OCI-LY7 (cell line): ENCODE measurements at regions of chr3 and their contacts with region 1.

Region 1: GRCh38 chr3:186985661-186986364 is 55.5 kb downstream of the ST6GAL1 start:
- DNase-seq: peak; percentile 75
- H3K4me3 ChIP-seq: peak overlapping the region; percentile 54
- H3K27ac ChIP-seq: peak overlapping the region; percentile 98
- H3K4me1 ChIP-seq: peaks cover 75% of the 10 kb centered on the region
- CTCF ChIP-seq: no peak

Region 2: GRCh38 chr3:186959029-186959624 is 26.7 kb before region 1 on chr3:
- CTCF ChIA-PET with region 1: no interaction called
- POLR2A ChIA-PET with region 1: interaction called, 10 read pairs
- intact Hi-C with region 1: no loop called
- DNase-seq: peak; percentile 57
- H3K4me3 ChIP-seq: peak overlapping the region; percentile 0
- H3K27ac ChIP-seq: peak overlapping the region; percentile 51
- H3K4me1 ChIP-seq: peaks cover 37% of the 10 kb centered on the region
- CTCF ChIP-seq: no peak

Region 3: GRCh38 chr3:187000711-187001151 is 14.9 kb after region 1 on chr3:
- CTCF ChIA-PET with region 1: no interaction called
- POLR2A ChIA-PET with region 1: interaction called, 37 read pairs
- intact Hi-C with region 1: no loop called
- DNase-seq: peak; percentile 92
- H3K4me3 ChIP-seq: peak overlapping the region; percentile 77
- H3K27ac ChIP-seq: peak overlapping the region; percentile 98
- H3K4me1 ChIP-seq: peaks cover 72% of the 10 kb centered on the region
- CTCF ChIP-seq: no peak

Region 4: DNA sequence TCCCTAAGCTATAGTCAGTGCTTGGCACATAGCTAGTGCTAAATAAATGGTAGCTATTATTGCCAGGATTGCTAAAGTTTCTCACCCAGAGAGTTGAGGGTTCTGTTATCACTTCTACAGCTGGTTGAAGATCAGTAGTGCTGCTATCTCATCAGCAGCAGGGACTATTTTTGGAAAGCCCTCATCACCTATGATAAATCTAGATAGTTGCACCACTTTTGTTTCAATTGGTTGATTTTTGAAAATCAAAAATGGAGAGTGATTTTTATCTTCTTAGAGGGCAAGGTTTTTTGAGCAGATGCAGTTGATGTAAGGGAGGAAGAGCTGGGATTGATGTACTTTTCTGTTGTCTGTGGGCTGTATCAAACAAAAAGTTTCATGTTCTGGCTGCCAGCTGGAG is 46.1 kb after region 1 on chr3:
- CTCF ChIA-PET with region 1: no interaction called
- POLR2A ChIA-PET with region 1: interaction called, 21 read pairs
- intact Hi-C with region 1: no loop called
- DNase-seq: no peak
- H3K4me3 ChIP-seq: peak overlapping the region; percentile 42
- H3K27ac ChIP-seq: peak overlapping the region; percentile 98
- H3K4me1 ChIP-seq: peaks cover 62% of the 10 kb centered on the region
- CTCF ChIP-seq: no peak

Region 5: DNA sequence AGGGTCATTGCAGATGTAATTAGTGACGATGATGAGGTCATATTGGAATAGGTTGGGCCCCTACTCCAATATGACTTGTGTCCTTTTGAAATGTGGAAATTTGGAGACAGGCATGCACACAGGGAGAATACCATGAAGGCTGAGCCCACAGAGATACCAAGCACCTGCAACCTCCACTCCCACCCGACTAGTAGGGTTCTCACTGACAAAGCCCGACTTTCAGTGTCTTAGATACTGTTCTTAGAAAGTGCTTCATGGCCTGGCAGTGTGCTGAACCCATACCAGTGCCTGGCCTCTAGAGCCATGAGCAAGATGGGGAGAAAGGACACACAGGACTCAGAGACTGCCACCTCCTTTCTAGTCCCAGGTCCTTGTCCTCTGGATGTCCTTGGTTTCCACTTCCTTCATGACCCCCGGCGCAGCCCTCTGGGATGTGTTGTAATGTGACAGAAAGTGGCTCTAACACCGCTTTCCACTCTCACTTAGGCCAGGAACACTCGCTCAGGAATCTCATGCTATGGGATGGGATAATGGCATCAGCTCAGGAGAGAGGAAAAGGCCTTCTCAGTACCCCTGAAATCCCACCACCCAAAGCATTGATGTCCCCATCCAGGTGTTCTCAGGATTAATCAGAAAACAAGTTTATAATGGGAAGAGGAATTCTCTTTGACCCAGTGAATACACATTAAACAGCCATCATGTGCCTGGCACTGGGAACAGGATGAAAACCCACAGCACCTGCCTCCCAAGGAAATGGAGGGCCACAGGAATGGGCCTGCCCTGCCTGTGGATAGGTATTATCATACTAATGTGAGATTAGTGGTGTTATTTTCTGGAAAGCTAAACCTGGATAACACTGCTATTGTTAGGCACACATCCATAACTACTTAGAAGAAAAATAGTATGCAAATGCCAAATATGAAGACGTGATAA is 93.5 kb after region 1 on chr3:
- CTCF ChIA-PET with region 1: no interaction called
- POLR2A ChIA-PET with region 1: no interaction called
- intact Hi-C with region 1: no loop called
- DNase-seq: no peak
- H3K4me3 ChIP-seq: no peak overlapping the region
- H3K27ac ChIP-seq: peak overlapping the region; percentile 2
- H3K4me1 ChIP-seq: peaks cover 3% of the 10 kb centered on the region
- CTCF ChIP-seq: no peak